A673 (cell line): ENCODE measurements at regions of chr3 and their contacts with region 1.

Region 1: DNA sequence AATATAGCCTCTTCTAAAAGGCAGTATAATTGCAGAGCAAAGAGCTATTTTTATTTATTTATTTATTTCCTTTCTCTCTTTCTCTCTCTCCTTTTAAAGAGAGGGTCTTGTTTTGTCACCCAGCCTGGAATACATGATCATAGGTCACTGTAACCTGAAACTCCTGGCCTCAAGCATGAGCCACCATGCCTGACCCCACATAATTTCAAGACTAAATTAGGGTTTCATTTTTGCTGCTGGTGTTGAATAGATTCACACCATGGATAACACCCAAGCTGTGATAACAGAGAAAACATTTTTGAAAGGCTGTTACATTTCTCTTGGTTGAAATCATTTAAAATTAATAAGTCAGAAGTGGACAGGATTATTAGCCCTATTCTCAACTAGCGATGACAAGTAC is 131.6 kb downstream of the LEKR1 start:
- DNase-seq: no peak
- H3K4me3 ChIP-seq: no peak overlapping the region
- H3K27ac ChIP-seq: no peak overlapping the region
- H3K4me1 ChIP-seq: no peaks in the 10 kb centered on the region
- H3K27me3 ChIP-seq: no peaks in the 10 kb centered on the region
- CTCF ChIP-seq: no peak

Region 2: DNA sequence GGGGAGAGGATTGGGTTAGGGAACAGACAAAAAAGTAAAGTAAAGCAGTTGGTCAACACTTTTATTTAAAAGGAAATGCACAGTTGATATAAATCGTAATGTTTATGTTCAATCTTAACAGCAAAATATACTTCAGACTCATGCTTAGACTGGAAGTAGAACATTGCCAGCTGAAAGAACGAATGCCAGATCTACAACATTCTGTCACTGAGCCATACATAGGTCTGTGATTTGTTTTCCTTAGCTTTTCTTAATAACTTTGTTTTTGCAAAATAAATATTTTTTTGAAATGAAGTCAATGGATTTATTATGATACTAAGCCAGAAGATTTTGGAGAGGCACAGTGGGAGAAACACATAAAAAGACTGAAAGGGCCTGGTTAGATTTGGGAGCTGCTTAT is 69.5 kb before region 1 on chr3:
- CTCF ChIA-PET with region 1: no interaction called
- POLR2A ChIA-PET with region 1: no interaction called
- intact Hi-C with region 1: no loop called
- DNase-seq: no peak
- H3K4me3 ChIP-seq: no peak overlapping the region
- H3K27ac ChIP-seq: no peak overlapping the region
- H3K4me1 ChIP-seq: no peaks in the 10 kb centered on the region
- H3K27me3 ChIP-seq: no peaks in the 10 kb centered on the region
- CTCF ChIP-seq: no peak

Region 3: GRCh38 chr3:156973954-156974353 is 16.2 kb after region 1 on chr3:
- CTCF ChIA-PET with region 1: no interaction called
- POLR2A ChIA-PET with region 1: no interaction called
- intact Hi-C with region 1: loop called (anchors 2 kb)
- DNase-seq: no peak
- H3K4me3 ChIP-seq: no peak overlapping the region
- H3K27ac ChIP-seq: no peak overlapping the region
- H3K4me1 ChIP-seq: peaks cover 4% of the 10 kb centered on the region
- H3K27me3 ChIP-seq: no peaks in the 10 kb centered on the region
- CTCF ChIP-seq: no peak

Region 4: DNA sequence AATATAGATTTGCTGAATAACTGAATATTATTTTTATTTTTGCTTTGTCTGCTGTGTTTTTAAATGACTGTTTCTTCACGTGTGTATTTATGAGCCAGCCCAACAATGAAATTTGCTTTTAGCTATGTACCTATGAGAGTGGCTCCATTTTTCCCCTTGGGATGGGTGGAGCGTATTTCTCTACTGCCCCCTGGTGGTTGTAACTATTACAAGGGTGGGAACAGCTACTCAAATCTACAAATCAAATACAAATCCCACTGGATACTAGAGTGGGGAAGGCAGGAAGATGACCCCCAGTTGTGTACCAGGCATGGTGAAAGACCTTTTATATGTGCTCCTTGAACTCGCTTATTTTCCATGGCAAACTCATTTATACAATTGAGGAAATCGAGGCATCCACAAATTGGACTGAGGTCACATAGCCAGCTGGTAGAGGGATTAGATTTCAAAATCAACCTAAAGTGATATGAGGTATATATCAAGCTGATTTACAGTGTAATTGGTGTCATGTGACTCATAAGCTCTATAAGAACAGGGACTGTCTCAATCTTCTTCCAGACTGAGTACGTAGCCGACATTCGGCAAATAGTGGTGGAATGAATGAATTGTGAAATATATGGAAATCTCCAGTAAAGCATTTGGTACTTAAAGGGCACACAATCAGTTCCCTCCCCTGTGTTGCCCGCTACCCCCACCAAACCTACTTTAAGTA is 615.0 kb after region 1 on chr3:
- CTCF ChIA-PET with region 1: no interaction called
- POLR2A ChIA-PET with region 1: no interaction called
- intact Hi-C with region 1: no loop called
- DNase-seq: peak; percentile 71
- H3K4me3 ChIP-seq: no peak overlapping the region
- H3K27ac ChIP-seq: no peak overlapping the region
- H3K4me1 ChIP-seq: no peaks in the 10 kb centered on the region
- H3K27me3 ChIP-seq: peaks cover 12% of the 10 kb centered on the region
- CTCF ChIP-seq: peak; percentile 82